Ascending aorta (tissue), 2 donors: ENCODE measurements at regions of chr20 and their contacts with region 1.

Region 1: GRCh38 chr20:44609511-44610312 is 27.3 kb downstream of the PKIG start:
- DNase-seq: peak in 1 of 2 donors; percentile 95
- H3K4me3 ChIP-seq: peak overlapping the region; percentile 15 to 51
- H3K27ac ChIP-seq: peak overlapping the region; percentile 83 to 88
- H3K4me1 ChIP-seq: peaks cover 5 to 20% of the 10 kb centered on the region in 2 donors
- H3K27me3 ChIP-seq: no peaks in the 10 kb centered on the region
- CTCF ChIP-seq: peak; percentile 98

Region 2: DNA sequence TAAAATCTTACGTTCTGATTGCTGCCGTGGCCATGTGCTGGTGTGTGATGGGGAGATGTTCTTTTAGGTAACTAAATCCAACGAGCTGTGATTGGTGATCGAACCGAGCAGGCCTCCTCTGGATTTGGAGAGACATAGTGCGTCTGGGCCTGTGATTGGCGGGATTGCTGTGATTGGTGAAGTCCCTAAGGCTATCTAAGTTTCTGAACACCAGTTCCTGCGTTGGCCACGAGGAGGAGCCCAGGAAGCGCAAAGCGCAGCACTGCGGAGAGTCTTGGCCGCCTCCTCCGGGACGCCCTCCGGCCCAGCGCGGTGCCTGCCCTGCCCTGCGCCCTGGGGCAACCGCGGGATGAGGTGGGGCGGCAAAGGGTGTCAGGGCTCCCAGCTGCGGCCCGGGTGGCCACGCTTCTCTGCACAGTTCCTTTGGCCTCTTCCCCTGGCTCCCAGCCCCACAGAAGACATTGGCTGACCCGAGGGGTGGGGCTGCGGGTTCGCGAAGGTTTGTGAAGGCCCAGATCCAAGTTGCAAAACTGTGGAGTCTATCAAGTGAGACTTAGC is 221.2 kb before region 1 on chr20:
- intact Hi-C with region 1: loop called (anchors 1 kb)
- DNase-seq: peak in 1 of 2 donors; percentile 68
- H3K4me3 ChIP-seq: no peak overlapping the region
- H3K27ac ChIP-seq: no peak overlapping the region
- H3K4me1 ChIP-seq: peaks cover 0 to 2% of the 10 kb centered on the region in 2 donors
- H3K27me3 ChIP-seq: no peaks in the 10 kb centered on the region
- CTCF ChIP-seq: peak; percentile 44 to 58 (median 56)

Region 3: GRCh38 chr20:44475694-44476560 is 133.8 kb before region 1 on chr20 and contains the start of gene TTPAL:
- intact Hi-C with region 1: loop called (anchors 1 kb)
- DNase-seq: peak; percentile 50 to 94
- H3K4me3 ChIP-seq: peak within 1 kb of the TSS; percentile 74 to 84
- H3K27ac ChIP-seq: peak within 1 kb of the TSS; percentile 94 to 97
- H3K4me1 ChIP-seq: peaks cover 5 to 6% of the 10 kb centered on the region in 2 donors
- H3K27me3 ChIP-seq: no peaks in the 10 kb centered on the region
- CTCF ChIP-seq: peak in 2 of 3 experiments; percentile 25 to 60
- total RNA-seq, gene TTPAL: 44.9 TPM

Region 4: GRCh38 chr20:44532259-44532980 is 77.3 kb before region 1 on chr20:
- intact Hi-C with region 1: loop called (anchors 1 kb)
- DNase-seq: no peak
- H3K4me3 ChIP-seq: peak overlapping the region; percentile 73 to 99
- H3K27ac ChIP-seq: peak overlapping the region; percentile 3 to 76
- H3K4me1 ChIP-seq: peaks cover 0 to 10% of the 10 kb centered on the region in 2 donors
- H3K27me3 ChIP-seq: no peaks in the 10 kb centered on the region
- CTCF ChIP-seq: no peak